ENCODE measurements at regions of chr13 and their contacts with region 1.

Region 1: GRCh38 chr13:26186118-26186870 is 35.8 kb downstream of the RNF6 start:
- DNase-seq: peak; percentile 32 to 94
- ATAC-seq: peak; percentile 96 to 97
- H3K4me3 ChIP-seq: peak overlapping the region; percentile 48
- H3K27ac ChIP-seq: peak overlapping the region; percentile 64 to 80; a peak in 5 of 6 replicates
- H3K4me1 ChIP-seq: no peaks in the 10 kb centered on the region
- CTCF ChIP-seq: peak; percentile 33
- EP300 ChIP-seq: no peak
- POLR2A ChIP-seq: peak; percentile 45
- RAD21 ChIP-seq: 0 out of 5 replicates have a peak, but pooled peaks of 1 of the 2 experiments have one; percentile 14

Region 2: GRCh38 chr13:26200811-26201210 is 14.5 kb after region 1 on chr13:
- CTCF ChIA-PET with region 1: interaction called, 12 read pairs
- POLR2A ChIA-PET with region 1: interaction called, 3 read pairs
- DNase-seq: no peak
- ATAC-seq: no peak
- H3K4me3 ChIP-seq: no peak overlapping the region
- H3K27ac ChIP-seq: no peak overlapping the region
- H3K4me1 ChIP-seq: no peaks in the 10 kb centered on the region
- CTCF ChIP-seq: no peak
- EP300 ChIP-seq: no peak
- POLR2A ChIP-seq: no peak
- RAD21 ChIP-seq: no peak

Region 3: DNA sequence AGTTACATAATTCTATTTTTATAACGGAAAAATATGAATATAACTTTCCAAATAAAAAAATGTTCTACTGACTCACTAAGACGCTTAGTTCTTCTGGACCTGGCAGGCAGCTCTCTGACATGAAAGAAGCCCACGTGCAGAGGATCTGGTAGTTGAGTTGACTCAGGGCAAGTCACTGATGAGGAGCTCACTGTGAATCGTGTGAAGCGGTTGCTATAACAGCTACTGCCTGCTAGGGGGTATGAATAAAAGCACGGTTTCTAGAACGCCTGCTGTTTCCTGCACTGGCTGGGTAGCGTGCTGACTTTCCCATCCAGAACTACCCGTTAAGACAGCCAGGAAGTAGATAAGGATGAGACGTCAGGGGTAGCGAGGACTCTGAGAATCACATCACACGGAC is 316.5 kb after region 1 on chr13:
- CTCF ChIA-PET with region 1: interaction called, 54 read pairs
- POLR2A ChIA-PET with region 1: no interaction called
- DNase-seq: no peak
- ATAC-seq: no peak
- H3K4me3 ChIP-seq: no peak overlapping the region
- H3K27ac ChIP-seq: no peak overlapping the region
- H3K4me1 ChIP-seq: no peaks in the 10 kb centered on the region
- CTCF ChIP-seq: no peak
- EP300 ChIP-seq: no peak
- POLR2A ChIP-seq: no peak
- RAD21 ChIP-seq: no peak

Region 4: DNA sequence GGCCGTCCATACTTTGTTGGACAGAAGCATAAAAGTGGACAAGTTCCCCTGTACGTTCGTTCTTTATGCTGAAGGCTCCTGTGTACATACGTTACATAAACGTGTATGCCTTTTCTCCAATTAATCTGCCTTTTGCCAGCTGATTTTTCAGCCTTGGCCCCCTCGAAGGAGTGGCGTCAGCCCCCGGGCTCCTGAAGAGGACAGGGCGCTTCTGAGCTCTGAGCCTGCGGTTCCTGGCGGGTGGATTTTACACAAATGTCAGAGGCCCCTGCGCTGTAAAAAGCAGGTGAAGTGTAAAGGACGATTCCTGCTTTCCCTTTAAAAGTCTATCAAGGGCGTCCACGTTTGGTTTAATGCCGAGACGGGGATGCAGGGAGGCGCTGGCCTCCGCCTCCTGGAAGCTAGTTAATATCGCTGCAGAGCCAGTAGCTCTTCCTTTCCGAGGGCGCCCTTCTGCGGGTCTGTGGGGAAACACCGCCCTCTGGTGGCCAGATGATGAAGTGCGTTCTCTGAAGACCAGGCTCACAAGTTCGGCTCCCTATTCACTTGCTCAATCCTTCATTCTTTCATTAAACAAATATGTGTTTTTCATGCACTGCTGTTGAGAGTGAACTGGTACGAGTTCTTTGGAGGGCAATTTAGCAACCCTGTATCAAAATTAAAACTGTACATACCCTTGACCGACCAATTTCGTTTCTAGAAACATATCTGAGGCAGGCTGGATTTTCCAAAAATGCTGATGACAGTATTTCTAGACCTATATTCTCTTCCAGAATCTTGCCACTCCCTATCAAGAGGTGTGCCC is 512.3 kb after region 1 on chr13:
- CTCF ChIA-PET with region 1: interaction called, 37 read pairs
- POLR2A ChIA-PET with region 1: interaction called, 4 read pairs
- DNase-seq: peak; percentile 43 to 72
- ATAC-seq: peak; percentile 76 to 93
- H3K4me3 ChIP-seq: no peak overlapping the region
- H3K27ac ChIP-seq: no peak overlapping the region
- H3K4me1 ChIP-seq: no peaks in the 10 kb centered on the region
- CTCF ChIP-seq: peak; percentile 69
- EP300 ChIP-seq: no peak
- POLR2A ChIP-seq: no peak
- RAD21 ChIP-seq: peak; percentile 81 to 86